Gastrocnemius medialis (tissue), 4 donors: ENCODE measurements at regions of chr10 and their contacts with region 1.

Region 1: DNA sequence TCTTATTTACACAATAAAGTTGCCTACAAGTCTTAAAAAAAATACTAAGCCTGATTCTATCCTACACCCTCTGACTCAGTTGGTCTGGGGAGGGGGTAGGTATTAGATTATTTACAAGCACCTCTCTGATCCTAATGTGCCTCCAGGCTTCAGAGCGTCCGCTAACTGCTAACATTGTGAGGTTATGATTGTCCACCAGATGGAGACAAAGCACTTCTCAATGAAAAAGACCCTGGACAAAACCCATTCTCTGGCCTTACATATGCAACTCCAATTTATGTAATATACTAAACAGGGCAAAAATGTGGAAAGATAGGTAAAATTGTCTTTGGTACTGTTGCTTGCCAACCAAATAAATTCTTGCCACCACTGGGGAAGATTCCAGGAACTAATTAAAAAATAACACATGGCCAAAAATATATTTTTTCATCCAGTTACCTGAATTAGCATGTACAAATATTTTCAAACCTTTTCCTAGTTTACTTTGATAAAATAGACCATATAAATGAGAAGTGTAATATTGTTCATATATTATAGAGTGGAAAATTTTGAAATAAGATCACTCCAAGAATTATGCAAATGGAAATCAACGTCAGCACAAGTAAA is 92.4 kb downstream of the KIF20B start:
- DNase-seq: no peak
- ATAC-seq: peak in 1 of 2 donors; percentile 51
- H3K4me3 ChIP-seq: no peak overlapping the region
- H3K27ac ChIP-seq: no peak overlapping the region
- H3K4me1 ChIP-seq: no peaks in the 10 kb centered on the region
- H3K27me3 ChIP-seq: no peaks in the 10 kb centered on the region
- CTCF ChIP-seq: peak; percentile 21 to 67 (median 57)
- POLR2A ChIP-seq: no peak

Region 2: GRCh38 chr10:90787393-90788198 is 993.8 kb after region 1 on chr10:
- in situ Hi-C with region 1: loop called in 2 of 4 experiments (anchors 10 to 25 kb)
- intact Hi-C with region 1: loop called (anchors 5 kb)
- DNase-seq: no peak
- ATAC-seq: no peak
- H3K4me3 ChIP-seq: no peak overlapping the region
- H3K27ac ChIP-seq: no peak overlapping the region
- H3K4me1 ChIP-seq: no peaks in the 10 kb centered on the region
- H3K27me3 ChIP-seq: peaks cover 0 to 2% (median 0%) of the 10 kb centered on the region in 3 donors
- CTCF ChIP-seq: peak in 4 of 5 experiments; percentile 21 to 68 (median 49)
- POLR2A ChIP-seq: no peak

Region 3: GRCh38 chr10:90871766-90872647 is 1078.3 kb after region 1 on chr10 and contains the start of gene RPP30:
- in situ Hi-C with region 1: loop called in 1 of 4 experiments (anchors 25 kb)
- intact Hi-C with region 1: loop called (anchors 5 kb)
- DNase-seq: peak; percentile 68 to 81
- ATAC-seq: peak; percentile 96 to 97
- H3K4me3 ChIP-seq: peak within 1 kb of the TSS; percentile 67 to 99 (median 87)
- H3K27ac ChIP-seq: peak within 1 kb of the TSS; percentile 82 to 93 (median 85)
- H3K4me1 ChIP-seq: peaks cover 16 to 21% of the 10 kb centered on the region in 2 donors
- H3K27me3 ChIP-seq: peaks cover 0 to 5% (median 0%) of the 10 kb centered on the region in 3 donors
- CTCF ChIP-seq: no peak
- POLR2A ChIP-seq: peak; percentile 31 to 41
- total RNA-seq, gene RPP30: 20.4 to 44.9 (median 31.3) TPM